ENCODE measurements at regions of chr20 and their contacts with region 1.

Region 1: DNA sequence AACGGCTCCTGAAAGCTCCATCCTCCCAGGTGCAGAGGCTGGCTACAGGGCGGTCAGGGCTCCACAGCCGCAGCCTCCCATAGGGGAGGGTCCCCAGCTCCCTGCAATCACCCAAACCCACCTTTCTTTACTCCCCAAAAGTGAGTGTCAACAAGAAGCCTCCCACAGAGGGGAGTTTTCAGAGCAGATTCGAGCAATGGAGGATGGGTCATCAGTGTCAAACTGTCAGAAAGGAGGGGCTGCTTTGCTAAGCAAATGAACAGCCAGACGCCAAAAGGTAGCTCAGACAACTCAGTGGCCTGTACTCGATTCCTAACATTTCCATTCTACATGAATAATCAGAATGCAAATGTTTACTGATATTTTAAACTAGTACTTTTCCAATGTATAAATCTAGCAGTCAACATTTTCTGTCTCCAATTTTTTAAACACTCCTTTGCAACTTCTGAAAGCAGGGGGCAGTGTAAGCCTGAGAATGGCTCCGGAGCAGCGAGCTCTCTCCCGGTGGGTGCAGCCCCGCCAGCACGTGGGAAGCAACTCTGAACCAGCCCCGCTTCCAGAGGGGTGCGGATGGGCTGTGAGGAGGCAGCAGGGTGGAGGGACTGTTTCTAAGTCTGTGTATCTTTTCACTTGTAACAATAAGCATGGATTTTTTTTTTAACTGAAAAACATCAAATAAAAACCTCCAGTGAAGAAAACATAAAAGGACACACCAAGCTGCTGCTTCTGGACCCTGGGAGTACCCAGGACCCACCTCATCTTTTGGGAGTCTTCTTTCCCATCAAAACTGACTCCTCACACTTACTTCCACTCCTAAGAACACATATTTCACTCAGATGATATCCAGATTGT is 54.9 kb downstream of the TAF4 start:
- DNase-seq: peak; percentile 10
- H3K4me3 ChIP-seq: no peak overlapping the region
- H3K27ac ChIP-seq: no peak overlapping the region
- H3K4me1 ChIP-seq: peaks cover 3% of the 10 kb centered on the region
- H3K27me3 ChIP-seq: no peaks in the 10 kb centered on the region
- CTCF ChIP-seq: peak; percentile 35 to 69

Region 2: DNA sequence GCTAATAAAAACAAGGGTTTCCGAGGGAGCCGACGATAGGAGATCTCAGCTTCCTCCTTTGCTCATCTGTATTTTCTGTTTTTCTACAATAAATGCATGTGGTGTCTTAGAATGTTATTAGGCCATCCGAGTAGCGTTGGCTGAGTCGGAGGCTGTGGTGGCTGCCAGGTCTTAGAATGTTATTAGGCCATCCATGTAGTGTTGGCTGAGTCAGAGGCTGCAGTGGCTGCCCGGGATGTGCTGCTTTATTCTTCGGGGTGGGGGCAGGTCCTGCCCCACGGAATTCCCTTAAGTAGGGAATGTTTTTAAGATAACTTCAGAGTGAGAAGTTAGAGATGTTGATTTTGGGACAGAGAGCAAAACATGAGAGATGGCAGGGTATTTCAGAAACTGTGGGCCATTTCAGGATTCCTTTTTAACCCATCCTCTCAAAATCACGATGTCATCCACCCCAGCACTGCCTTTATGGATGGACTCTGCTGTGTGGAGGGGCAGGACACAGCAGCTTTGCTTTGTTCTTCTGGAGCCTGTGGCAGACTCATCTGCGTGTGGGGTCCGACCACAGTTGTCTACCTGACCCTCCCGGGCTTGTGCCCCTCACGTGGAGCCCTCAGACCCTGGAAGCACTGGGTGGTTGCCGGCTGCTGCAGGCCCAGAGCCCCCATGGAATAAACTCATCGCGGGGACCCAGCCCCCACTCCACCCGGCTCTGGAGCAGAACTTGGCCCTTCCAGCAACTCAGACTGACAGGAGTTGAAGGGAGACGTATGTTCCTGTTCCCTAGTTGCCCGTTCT is 247.9 kb after region 1 on chr20:
- CTCF ChIA-PET with region 1: no interaction called
- dilution Hi-C with region 1: no loop called
- in situ Hi-C with region 1: no loop called
- intact Hi-C with region 1: loop called (anchors 2 kb)
- DNase-seq: peak; percentile 49
- H3K4me3 ChIP-seq: no peak overlapping the region
- H3K27ac ChIP-seq: no peak overlapping the region
- H3K4me1 ChIP-seq: peaks cover 5% of the 10 kb centered on the region
- H3K27me3 ChIP-seq: no peaks in the 10 kb centered on the region
- CTCF ChIP-seq: no peak